ENCODE measurements at regions of chr17 and their contacts with region 1.

Region 1: DNA sequence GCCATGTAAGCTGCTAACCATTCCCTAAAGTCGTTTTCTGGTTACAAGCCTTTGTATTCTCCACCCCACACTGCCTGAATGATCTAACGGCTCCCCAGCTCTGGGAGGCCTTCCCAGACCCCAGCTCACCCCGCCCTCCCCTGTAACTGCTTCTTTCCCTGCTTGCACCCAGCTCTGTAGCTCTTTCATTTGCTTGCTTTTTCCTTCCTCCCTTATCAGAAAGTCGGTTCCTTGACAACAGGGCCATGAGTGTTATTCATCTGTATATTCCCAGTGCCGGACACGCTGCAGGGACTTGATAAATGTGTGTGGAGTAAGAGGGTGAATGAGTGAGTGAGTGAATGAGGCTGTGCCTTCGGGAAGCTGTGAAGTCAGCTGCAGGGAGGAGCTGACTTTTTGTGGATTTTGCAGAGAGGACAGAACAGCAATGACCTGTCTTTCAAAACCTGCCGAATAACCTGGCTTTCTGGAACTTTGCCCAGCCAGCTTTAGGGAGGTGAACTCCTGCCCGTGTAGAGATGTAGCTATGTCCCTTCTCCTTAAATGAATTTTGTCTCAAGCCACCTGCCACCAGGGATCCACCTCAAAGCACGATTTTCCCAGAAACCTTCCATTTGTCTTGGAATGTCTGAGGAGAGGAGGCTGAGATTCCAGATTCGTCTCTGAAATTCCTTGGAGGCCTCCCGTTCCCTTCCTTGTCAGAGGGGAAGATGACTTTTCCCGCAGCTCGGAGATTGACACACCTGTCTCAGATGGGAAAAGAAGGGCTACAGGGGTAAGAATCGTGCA is 20.0 kb upstream of the CACNG4 start:
- DNase-seq: no peak
- H3K4me3 ChIP-seq: no peak overlapping the region
- H3K27ac ChIP-seq: no peak overlapping the region
- H3K4me1 ChIP-seq: peaks cover 1 to 10% (median 4%) of the 10 kb centered on the region in 4 experiments; a peak in 4 of 7 replicates
- H3K27me3 ChIP-seq: 0 out of 7 replicates have a peak, but pooled peaks cover 0 to 3% (median 0%) of the 10 kb centered on the region in 4 experiments
- CTCF ChIP-seq: no peak
- EP300 ChIP-seq: no peak
- POLR2A ChIP-seq: no peak
- RAD21 ChIP-seq: no peak

Region 2: GRCh38 chr17:66807182-66807581 is 137.4 kb before region 1 on chr17:
- CTCF ChIA-PET with region 1: no interaction called
- POLR2A ChIA-PET with region 1: no interaction called
- DNase-seq: no peak
- H3K4me3 ChIP-seq: no peak overlapping the region
- H3K27ac ChIP-seq: no peak overlapping the region
- H3K4me1 ChIP-seq: peaks cover 12 to 17% (median 13%) of the 10 kb centered on the region in 4 experiments
- H3K27me3 ChIP-seq: no peaks in the 10 kb centered on the region
- CTCF ChIP-seq: no peak
- EP300 ChIP-seq: no peak
- POLR2A ChIP-seq: no peak
- RAD21 ChIP-seq: no peak

Region 3: DNA sequence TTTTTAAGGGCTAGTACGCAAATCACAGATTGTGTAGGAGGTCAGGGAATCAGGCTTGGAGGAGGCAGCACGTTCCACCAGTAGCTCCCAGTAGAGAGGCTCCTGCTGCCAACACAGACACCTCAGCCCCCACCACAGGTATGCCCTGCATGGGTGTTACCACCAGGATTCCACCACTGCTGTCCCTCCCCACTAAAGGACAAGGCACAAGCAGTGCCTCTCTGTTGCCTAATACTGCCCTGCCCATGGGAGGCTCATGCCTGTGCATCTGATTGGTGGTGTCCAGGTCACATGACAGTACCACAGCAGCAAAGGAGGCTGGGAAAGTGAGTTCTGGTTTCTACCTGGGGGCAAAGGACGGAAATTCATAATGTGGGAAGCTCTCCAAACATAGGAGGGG is 13.6 kb before region 1 on chr17:
- CTCF ChIA-PET with region 1: interaction called, 17 read pairs
- POLR2A ChIA-PET with region 1: no interaction called
- DNase-seq: peak in 1 of 2 experiments; percentile 56
- H3K4me3 ChIP-seq: no peak overlapping the region
- H3K27ac ChIP-seq: no peak overlapping the region
- H3K4me1 ChIP-seq: no peaks in the 10 kb centered on the region
- H3K27me3 ChIP-seq: no peaks in the 10 kb centered on the region
- CTCF ChIP-seq: no peak
- EP300 ChIP-seq: no peak
- POLR2A ChIP-seq: no peak
- RAD21 ChIP-seq: no peak